MCF 10A (cell line): ENCODE measurements at regions of chr7 and their contacts with region 1.

Region 1: DNA sequence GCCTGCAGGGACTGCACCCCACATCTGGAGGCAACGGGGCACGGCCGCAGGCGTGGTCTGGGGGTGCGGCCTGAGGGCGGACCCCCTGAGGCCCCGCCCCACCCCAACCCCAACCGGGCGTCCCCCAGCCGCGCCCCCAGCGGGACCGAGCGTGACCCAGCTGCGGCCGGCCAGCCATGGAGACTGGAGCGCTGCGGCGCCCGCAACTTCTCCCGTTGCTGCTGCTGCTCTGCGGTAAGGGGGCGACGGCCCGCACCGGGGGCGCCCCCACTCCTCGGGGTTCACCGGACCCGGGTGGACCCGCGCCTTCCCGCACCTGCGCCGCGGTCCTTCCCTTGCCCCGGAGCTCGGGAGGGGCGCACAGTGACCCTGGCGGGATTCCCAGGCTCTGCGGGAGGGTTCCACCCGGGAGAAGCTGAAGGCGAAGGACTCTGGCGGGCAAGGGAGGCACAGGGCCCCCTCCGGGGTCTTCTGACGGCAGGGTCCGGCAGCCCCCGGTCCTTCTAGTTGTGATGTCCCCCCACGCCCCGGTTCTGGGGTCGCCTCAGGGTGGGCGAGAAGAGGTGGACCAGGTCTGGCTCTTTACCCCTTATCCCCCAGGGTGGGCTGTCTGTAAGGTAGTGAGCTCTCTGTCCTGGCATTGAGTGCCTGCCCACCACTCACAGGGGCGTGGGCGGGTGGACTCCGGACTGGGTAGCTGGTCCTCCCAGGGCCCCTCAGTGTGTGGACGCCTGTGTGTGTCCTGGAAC is at the start of gene RAMP3:
- DNase-seq: no peak
- H3K4me3 Mint-ChIP-seq: no peak within 1 kb of the TSS
- H3K27ac Mint-ChIP-seq: no peak within 1 kb of the TSS
- H3K4me1 Mint-ChIP-seq: no peaks in the 10 kb centered on the region
- H3K27me3 Mint-ChIP-seq: peaks cover 14% of the 10 kb centered on the region
- CTCF ChIP-seq: no peak
- total RNA-seq, gene RAMP3: not detected in 2 replicates

Region 2: GRCh38 chr7:45187089-45187945 is 29.5 kb after region 1 on chr7:
- CTCF ChIA-PET with region 1: no interaction called
- POLR2A ChIA-PET with region 1: no interaction called
- intact Hi-C with region 1: no loop called
- DNase-seq: no peak
- H3K4me3 Mint-ChIP-seq: no peak overlapping the region
- H3K27ac Mint-ChIP-seq: no peak overlapping the region
- H3K4me1 Mint-ChIP-seq: no peaks in the 10 kb centered on the region
- H3K27me3 Mint-ChIP-seq: peaks cover 11% of the 10 kb centered on the region
- CTCF ChIP-seq: no peak

Region 3: DNA sequence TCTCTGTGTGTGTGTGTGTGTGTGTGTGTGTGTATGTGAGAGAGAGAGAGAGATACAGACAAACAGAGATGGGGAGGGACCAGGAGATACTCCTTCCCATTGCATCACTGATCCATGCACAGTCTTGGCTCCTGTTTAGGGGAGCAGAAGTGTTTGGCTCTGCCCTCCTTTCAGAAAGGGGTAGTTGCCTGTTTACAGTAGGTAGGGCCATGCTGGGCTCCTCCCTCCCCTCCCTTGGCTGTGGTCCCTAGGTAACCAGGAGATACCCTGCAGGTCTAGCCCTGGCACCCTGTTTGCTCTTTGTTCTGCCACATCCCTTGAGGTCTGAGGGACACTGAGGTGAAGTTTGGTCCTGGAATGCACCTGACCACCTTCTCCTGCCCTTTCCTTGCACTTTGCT is 95.0 kb after region 1 on chr7:
- CTCF ChIA-PET with region 1: interaction called, 81 read pairs
- POLR2A ChIA-PET with region 1: interaction called, 3 read pairs
- intact Hi-C with region 1: no loop called
- DNase-seq: no peak
- H3K4me3 Mint-ChIP-seq: no peak overlapping the region
- H3K27ac Mint-ChIP-seq: no peak overlapping the region
- H3K4me1 Mint-ChIP-seq: peaks cover 6% of the 10 kb centered on the region
- H3K27me3 Mint-ChIP-seq: peaks cover 66% of the 10 kb centered on the region
- CTCF ChIP-seq: no peak

Region 4: GRCh38 chr7:45259966-45260646 is 102.3 kb after region 1 on chr7:
- CTCF ChIA-PET with region 1: interaction called, 81 read pairs
- POLR2A ChIA-PET with region 1: interaction called, 3 read pairs
- intact Hi-C with region 1: loop called (anchors 1 kb)
- DNase-seq: peak; percentile 44
- H3K4me3 Mint-ChIP-seq: no peak overlapping the region
- H3K27ac Mint-ChIP-seq: no peak overlapping the region
- H3K4me1 Mint-ChIP-seq: no peaks in the 10 kb centered on the region
- H3K27me3 Mint-ChIP-seq: peaks cover 50% of the 10 kb centered on the region
- CTCF ChIP-seq: peak; percentile 99

Region 5: DNA sequence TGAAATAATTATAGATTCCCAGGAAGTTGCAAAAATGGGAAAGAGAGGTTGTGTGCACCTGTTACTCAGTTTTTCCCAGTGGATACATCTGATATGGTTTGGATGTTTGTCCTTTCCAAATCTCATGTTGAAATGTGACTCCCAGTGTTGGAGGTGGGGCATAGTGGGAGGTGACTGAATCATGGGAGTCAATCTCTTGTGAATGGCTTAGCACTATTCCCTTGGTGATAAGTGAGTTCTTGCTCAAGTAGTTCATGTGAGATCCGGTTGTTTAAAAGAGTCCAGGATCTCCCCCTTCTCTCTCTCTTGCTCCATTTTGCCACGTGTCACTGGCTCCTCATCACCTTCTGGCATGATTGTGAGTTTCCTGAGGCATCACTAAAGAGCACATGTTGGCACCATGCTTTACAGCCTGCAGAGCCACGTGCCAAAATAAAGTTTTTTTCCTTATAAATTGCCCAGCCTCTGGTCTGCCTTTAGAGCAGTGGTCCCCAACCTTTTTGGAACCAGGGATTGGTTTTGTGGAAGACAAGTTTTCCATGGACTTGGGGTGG is 149.0 kb after region 1 on chr7:
- CTCF ChIA-PET with region 1: no interaction called
- POLR2A ChIA-PET with region 1: no interaction called
- intact Hi-C with region 1: no loop called
- DNase-seq: no peak
- H3K4me3 Mint-ChIP-seq: no peak overlapping the region
- H3K27ac Mint-ChIP-seq: no peak overlapping the region
- H3K4me1 Mint-ChIP-seq: no peaks in the 10 kb centered on the region
- H3K27me3 Mint-ChIP-seq: peaks cover 63% of the 10 kb centered on the region
- CTCF ChIP-seq: no peak

Region 6: DNA sequence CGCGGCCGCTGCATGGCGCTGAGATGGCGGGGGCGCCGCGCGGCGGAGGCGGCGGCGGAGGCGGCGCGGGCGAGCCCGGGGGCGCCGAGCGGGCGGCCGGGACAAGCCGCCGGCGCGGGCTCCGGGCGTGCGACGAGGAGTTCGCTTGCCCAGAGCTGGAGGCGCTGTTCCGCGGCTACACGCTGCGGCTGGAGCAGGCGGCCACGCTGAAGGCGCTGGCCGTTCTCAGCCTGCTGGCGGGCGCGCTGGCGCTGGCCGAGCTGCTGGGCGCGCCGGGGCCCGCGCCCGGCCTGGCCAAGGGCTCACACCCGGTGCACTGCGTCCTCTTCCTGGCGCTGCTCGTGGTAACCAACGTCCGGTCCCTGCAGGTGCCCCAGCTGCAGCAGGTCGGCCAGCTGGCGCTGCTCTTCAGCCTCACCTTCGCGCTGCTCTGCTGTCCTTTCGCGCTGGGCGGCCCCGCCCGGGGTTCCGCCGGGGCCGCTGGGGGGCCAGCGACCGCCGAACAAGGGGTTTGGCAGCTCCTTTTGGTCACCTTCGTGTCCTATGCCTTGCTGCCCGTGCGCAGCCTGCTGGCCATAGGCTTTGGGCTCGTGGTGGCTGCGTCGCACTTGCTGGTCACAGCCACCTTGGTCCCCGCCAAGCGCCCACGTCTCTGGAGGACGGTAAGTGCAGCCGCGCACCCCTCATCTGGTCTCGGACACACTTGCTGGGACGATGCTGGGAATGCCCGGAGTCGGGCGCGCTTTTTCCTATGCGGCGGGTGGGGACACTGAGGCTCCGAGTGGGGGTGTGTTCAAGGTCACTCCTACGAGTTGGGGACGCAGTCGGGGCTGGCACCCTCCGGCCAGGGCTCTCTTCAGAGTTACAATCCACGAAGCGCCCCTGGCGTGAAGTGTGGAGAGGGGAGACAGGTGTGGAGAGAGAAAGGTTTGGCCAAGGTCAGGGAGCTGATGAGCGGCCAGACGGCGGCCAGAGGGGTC is 417.0 kb after region 1 on chr7:
- CTCF ChIA-PET with region 1: no interaction called
- POLR2A ChIA-PET with region 1: no interaction called
- intact Hi-C with region 1: loop called (anchors 10 kb)
- DNase-seq: peak; percentile 16
- H3K4me3 Mint-ChIP-seq: no peak overlapping the region
- H3K27ac Mint-ChIP-seq: no peak overlapping the region
- H3K4me1 Mint-ChIP-seq: no peaks in the 10 kb centered on the region
- H3K27me3 Mint-ChIP-seq: peaks cover 56% of the 10 kb centered on the region
- CTCF ChIP-seq: no peak

Region 7: GRCh38 chr7:45663167-45663921 is 505.5 kb after region 1 on chr7:
- CTCF ChIA-PET with region 1: no interaction called
- POLR2A ChIA-PET with region 1: no interaction called
- intact Hi-C with region 1: loop called (anchors 10 kb)
- DNase-seq: peak; percentile 46
- H3K4me3 Mint-ChIP-seq: no peak overlapping the region
- H3K27ac Mint-ChIP-seq: no peak overlapping the region
- H3K4me1 Mint-ChIP-seq: no peaks in the 10 kb centered on the region
- H3K27me3 Mint-ChIP-seq: peaks cover 13% of the 10 kb centered on the region
- CTCF ChIP-seq: peak; percentile 65